ENCODE measurements at regions of chr10 and their contacts with region 1.

Region 1: GRCh38 chr10:43689955-43690771 is 41.5 kb upstream of the ZNF32 start:
- DNase-seq: peak; percentile 29
- ATAC-seq: peak; percentile 99
- H3K4me3 ChIP-seq: no peak overlapping the region
- H3K27ac ChIP-seq: no peak overlapping the region
- H3K4me1 ChIP-seq: peaks cover 0 to 7% of the 10 kb centered on the region in 2 experiments; a peak in 1 of 4 replicates
- H3K27me3 ChIP-seq: 0 out of 2 replicates have a peak, but pooled peaks cover 18% of the 10 kb centered on the region
- CTCF ChIP-seq: peak; percentile 60 to 90 (median 77)
- POLR2A ChIP-seq: no peak
- RAD21 ChIP-seq: peak; percentile 70

Region 2: GRCh38 chr10:43781480-43782361 is 91.6 kb after region 1 on chr10:
- CTCF ChIA-PET with region 1: interaction called, 3 read pairs
- POLR2A ChIA-PET with region 1: no interaction called
- RAD21 ChIA-PET with region 1: no interaction called
- intact Hi-C with region 1: loop called (anchors 10 kb)
- DNase-seq: no peak
- ATAC-seq: no peak
- H3K4me3 ChIP-seq: no peak overlapping the region
- H3K27ac ChIP-seq: no peak overlapping the region
- H3K4me1 ChIP-seq: no peaks in the 10 kb centered on the region
- H3K27me3 ChIP-seq: no peaks in the 10 kb centered on the region
- CTCF ChIP-seq: no peak
- POLR2A ChIP-seq: no peak
- RAD21 ChIP-seq: no peak

Region 3: DNA sequence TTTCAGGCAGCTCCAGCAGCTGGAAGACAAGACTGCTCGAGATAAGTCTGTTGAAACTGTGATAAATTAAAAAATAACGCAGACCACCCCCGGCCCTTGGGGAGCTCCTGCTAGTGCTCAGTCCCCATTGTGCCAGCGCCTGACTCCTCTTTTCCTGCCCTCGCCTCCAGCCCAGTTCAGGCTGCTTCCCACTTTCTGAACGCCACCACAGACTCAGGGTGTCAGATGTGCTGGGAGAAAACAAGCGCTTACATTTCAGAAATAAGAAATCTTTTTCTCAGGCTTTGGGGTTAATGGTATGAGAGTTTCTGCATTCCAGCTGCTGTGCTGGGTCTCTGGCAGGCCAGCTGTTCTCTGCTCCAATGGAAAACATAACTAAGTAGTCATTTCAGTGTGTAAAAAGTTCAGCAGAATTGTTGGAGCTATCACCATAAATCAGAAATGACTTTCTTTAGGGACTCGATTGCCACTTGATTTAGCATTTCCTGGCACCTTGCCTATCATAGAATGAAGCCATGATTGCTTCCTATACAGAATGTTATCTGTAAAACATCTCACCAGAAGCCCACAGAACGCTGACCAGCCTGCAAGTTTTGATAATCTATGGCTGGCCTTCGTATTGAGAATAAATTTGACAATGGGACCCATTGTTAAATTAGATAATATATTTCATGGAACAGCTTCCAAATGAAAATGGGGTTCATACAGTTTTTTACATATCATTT is 215.5 kb after region 1 on chr10:
- CTCF ChIA-PET with region 1: no interaction called
- POLR2A ChIA-PET with region 1: no interaction called
- RAD21 ChIA-PET with region 1: no interaction called
- intact Hi-C with region 1: no loop called
- DNase-seq: no peak
- ATAC-seq: no peak
- H3K4me3 ChIP-seq: no peak overlapping the region
- H3K27ac ChIP-seq: no peak overlapping the region
- H3K4me1 ChIP-seq: no peaks in the 10 kb centered on the region
- H3K27me3 ChIP-seq: peaks cover 43% of the 10 kb centered on the region
- CTCF ChIP-seq: no peak
- POLR2A ChIP-seq: no peak
- RAD21 ChIP-seq: no peak

Measured in HCT116 (cell line).